CD4-positive, alpha-beta T cell (primary cell): ENCODE measurements at regions of chr4 and their contacts with region 1.

Region 1: GRCh38 chr4:77075869-77076799 is at the start of gene CCNI:
- DNase-seq: peak; percentile 85 to 97 (median 90)
- ATAC-seq: peak; percentile 65
- H3K4me3 ChIP-seq: peak within 1 kb of the TSS; percentile 77
- H3K4me3 Mint-ChIP-seq: peak within 1 kb of the TSS; percentile 94
- H3K27ac ChIP-seq: peak within 1 kb of the TSS; percentile 99 to 100
- H3K27ac Mint-ChIP-seq: no peak within 1 kb of the TSS
- H3K4me1 ChIP-seq: peaks cover 21% of the 10 kb centered on the region
- H3K4me1 Mint-ChIP-seq: peaks cover 35% of the 10 kb centered on the region
- H3K27me3 ChIP-seq: no peaks in the 10 kb centered on the region
- H3K27me3 Mint-ChIP-seq: no peaks in the 10 kb centered on the region
- CTCF ChIP-seq: no peak
- total RNA-seq, gene CCNI: 385 to 418 TPM

Region 2: DNA sequence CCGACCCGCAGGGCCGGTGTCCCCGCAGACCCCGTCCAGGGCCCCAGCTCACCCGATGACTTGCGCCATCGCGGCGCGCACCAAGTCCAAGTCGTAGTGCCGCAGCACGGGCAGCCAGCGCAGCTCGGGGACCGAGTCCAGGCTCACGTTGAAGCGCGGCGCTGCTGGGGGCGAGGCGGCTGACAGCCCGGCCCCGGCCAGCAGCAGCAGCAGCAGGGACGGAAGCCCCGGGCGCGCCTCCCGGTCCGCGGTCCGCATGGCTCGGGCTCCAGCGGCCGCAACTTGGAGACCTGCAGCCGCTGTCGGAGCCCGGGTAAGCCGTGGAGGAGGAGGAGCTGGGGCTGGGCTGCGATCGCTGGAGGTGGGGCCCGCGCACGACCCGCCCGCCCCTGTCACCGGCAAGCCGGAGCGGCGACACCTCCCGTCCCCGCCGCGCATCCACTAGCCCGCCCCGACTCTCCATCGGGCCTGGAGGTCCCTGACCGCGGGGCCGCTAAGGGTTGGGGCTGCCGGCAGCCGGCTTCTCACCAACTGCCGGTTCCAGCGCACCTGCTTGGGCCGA is 1135.4 kb before region 1 on chr4 and contains the start of gene NAAA:
- CTCF ChIA-PET with region 1: no interaction called
- POLR2A ChIA-PET with region 1: no interaction called
- intact Hi-C with region 1: loop called in 1 of 2 experiments (anchors 5 kb)
- DNase-seq: peak; percentile 51 to 93 (median 72)
- ATAC-seq: peak; percentile 83
- H3K4me3 ChIP-seq: peak within 1 kb of the TSS; percentile 86
- H3K4me3 Mint-ChIP-seq: peak within 1 kb of the TSS; percentile 100
- H3K27ac ChIP-seq: peak within 1 kb of the TSS; percentile 79 to 86
- H3K27ac Mint-ChIP-seq: peak within 1 kb of the TSS; percentile 95
- H3K4me1 ChIP-seq: peaks cover 20% of the 10 kb centered on the region
- H3K4me1 Mint-ChIP-seq: peaks cover 27% of the 10 kb centered on the region
- H3K27me3 ChIP-seq: no peaks in the 10 kb centered on the region
- H3K27me3 Mint-ChIP-seq: no peaks in the 10 kb centered on the region
- CTCF ChIP-seq: no peak
- total RNA-seq, gene NAAA: 32.6 to 33.3 TPM

Region 3: DNA sequence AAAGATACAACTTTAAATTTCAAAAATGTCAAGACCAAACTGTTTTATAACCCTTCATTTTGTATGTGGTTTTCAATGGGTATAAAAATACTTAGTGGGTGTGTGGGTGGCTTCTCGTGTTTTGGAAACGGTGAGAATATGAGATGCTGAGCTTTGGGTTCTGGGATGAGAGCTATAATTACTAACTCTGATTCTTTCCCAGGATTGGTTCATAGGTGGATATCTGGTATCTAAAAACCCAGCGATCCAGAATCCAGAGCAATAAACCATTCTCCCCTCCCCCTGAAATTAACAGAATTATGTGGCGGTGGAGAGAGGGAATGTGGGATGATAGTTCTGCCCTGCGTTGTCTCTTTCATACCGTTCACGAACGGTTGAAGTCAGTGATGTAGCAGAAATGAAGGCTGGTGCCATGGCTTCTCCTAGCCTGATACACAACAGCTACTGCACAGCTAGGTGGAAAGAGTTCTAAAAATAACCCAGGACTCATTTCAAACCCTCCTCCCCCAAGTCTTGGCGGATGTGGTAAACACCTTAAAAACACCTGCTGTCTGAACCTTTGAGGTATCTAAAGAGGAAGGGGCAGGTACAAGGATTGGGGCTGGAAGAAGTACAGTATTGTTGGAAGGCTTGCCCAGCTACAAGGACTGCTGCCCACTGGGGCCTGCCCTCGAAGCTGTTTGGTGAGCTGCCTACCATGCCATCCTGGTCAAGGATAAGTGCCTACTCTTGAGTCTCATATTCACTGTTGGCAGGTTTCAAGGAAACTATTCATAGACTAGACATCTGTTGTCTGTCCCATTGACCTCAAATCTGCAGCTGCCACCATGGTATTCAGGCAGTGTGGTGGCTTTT is 82.1 kb before region 1 on chr4:
- CTCF ChIA-PET with region 1: no interaction called
- POLR2A ChIA-PET with region 1: interaction called, 5 read pairs
- intact Hi-C with region 1: loop called in 1 of 2 experiments (anchors 2 kb)
- DNase-seq: peak in 13 of 14 experiments; percentile 18 to 91 (median 37)
- ATAC-seq: peak; percentile 81
- H3K4me3 ChIP-seq: peak overlapping the region; percentile 16
- H3K4me3 Mint-ChIP-seq: peak overlapping the region; percentile 80
- H3K27ac ChIP-seq: peak overlapping the region in 1 of 2 donors; percentile 64
- H3K27ac Mint-ChIP-seq: peak overlapping the region; percentile 92
- H3K4me1 ChIP-seq: peaks cover 46% of the 10 kb centered on the region
- H3K4me1 Mint-ChIP-seq: peaks cover 81% of the 10 kb centered on the region
- H3K27me3 ChIP-seq: no peaks in the 10 kb centered on the region
- H3K27me3 Mint-ChIP-seq: no peaks in the 10 kb centered on the region
- CTCF ChIP-seq: no peak

Region 4: DNA sequence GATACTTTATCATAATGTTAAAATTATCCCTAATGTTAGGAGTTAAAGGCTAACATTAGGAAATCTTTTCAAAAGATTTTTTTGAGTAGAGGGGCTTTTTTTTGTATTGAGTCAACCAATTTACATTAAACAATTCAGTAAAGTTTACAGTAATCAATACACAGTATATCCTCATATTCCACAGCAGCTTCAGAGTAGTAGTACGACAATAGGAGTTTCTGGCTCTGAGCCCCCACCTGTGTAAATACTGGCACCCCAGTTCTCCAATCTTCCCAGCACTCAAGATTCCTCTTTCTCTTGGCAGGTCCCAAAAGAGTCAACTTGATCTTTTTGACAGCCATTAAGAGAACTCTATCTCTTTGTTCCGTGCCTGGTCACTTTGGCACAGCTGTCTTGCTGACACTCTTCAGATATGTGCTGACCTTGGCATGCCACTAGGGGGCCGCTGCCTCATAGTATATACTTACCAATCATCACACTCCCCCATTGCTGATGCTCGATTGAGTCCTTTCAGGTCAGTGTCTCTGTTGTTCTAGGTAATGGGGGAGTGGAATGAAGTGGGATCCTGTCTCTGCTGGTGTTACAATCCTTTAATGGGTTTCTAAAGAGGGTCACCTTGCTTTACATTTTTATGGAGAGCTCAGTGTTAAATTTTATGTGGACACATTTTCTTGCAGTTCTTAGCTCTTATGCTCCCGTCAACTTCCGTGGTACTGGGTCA is 19.1 kb after region 1 on chr4:
- CTCF ChIA-PET with region 1: interaction called, 10 read pairs
- POLR2A ChIA-PET with region 1: interaction called, 7 read pairs
- intact Hi-C with region 1: no loop called
- DNase-seq: peak; percentile 40 to 82 (median 65)
- ATAC-seq: peak; percentile 87
- H3K4me3 ChIP-seq: no peak overlapping the region
- H3K4me3 Mint-ChIP-seq: no peak overlapping the region
- H3K27ac ChIP-seq: no peak overlapping the region
- H3K27ac Mint-ChIP-seq: no peak overlapping the region
- H3K4me1 ChIP-seq: peaks cover 3% of the 10 kb centered on the region
- H3K4me1 Mint-ChIP-seq: peaks cover 19% of the 10 kb centered on the region
- H3K27me3 ChIP-seq: no peaks in the 10 kb centered on the region
- H3K27me3 Mint-ChIP-seq: no peaks in the 10 kb centered on the region
- CTCF ChIP-seq: peak; percentile 65

Region 5: GRCh38 chr4:77203380-77204197 is 127.5 kb after region 1 on chr4:
- CTCF ChIA-PET with region 1: interaction called, 10 read pairs
- POLR2A ChIA-PET with region 1: interaction called, 3 read pairs
- intact Hi-C with region 1: no loop called
- DNase-seq: peak; percentile 36 to 85 (median 56)
- ATAC-seq: peak; percentile 74
- H3K4me3 ChIP-seq: no peak overlapping the region
- H3K4me3 Mint-ChIP-seq: no peak overlapping the region
- H3K27ac ChIP-seq: no peak overlapping the region
- H3K27ac Mint-ChIP-seq: no peak overlapping the region
- H3K4me1 ChIP-seq: peaks cover 4% of the 10 kb centered on the region
- H3K4me1 Mint-ChIP-seq: no peaks in the 10 kb centered on the region
- H3K27me3 ChIP-seq: no peaks in the 10 kb centered on the region
- H3K27me3 Mint-ChIP-seq: no peaks in the 10 kb centered on the region
- CTCF ChIP-seq: peak; percentile 89

Region 6: DNA sequence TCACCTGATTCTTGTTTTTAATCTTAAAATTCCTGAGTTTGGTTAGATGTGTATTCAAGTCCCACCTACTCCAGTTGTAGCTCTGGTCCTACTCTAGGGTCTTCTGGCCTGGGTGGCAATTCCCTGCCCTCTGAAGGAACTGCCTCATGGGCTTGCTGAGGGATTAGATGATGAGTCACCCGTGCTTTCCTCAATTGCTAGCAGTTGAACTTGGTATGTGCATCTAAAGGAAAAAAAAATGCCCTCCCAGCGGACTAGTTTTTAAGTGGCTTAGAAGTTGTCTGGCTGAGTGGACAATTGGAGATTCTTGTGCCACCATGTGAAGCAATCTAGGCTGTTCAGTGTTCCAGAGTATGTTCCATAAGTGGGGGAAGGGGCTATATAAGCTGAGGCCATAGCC is 207.9 kb after region 1 on chr4:
- CTCF ChIA-PET with region 1: no interaction called
- POLR2A ChIA-PET with region 1: no interaction called
- intact Hi-C with region 1: no loop called
- DNase-seq: no peak
- ATAC-seq: no peak
- H3K4me3 ChIP-seq: no peak overlapping the region
- H3K4me3 Mint-ChIP-seq: no peak overlapping the region
- H3K27ac ChIP-seq: no peak overlapping the region
- H3K27ac Mint-ChIP-seq: no peak overlapping the region
- H3K4me1 ChIP-seq: no peaks in the 10 kb centered on the region
- H3K4me1 Mint-ChIP-seq: no peaks in the 10 kb centered on the region
- H3K27me3 ChIP-seq: peaks cover 0 to 6% of the 10 kb centered on the region in 2 experiments
- H3K27me3 Mint-ChIP-seq: peaks cover 5% of the 10 kb centered on the region
- CTCF ChIP-seq: no peak

Region 7: GRCh38 chr4:78775303-78776030 is 1699.3 kb after region 1 on chr4:
- CTCF ChIA-PET with region 1: no interaction called
- POLR2A ChIA-PET with region 1: no interaction called
- intact Hi-C with region 1: loop called in 1 of 2 experiments (anchors 5 kb)
- DNase-seq: peak; percentile 74 to 93 (median 85)
- ATAC-seq: peak; percentile 61
- H3K4me3 ChIP-seq: peak overlapping the region; percentile 94
- H3K4me3 Mint-ChIP-seq: peak overlapping the region; percentile 96
- H3K27ac ChIP-seq: peak overlapping the region; percentile 72 to 87
- H3K27ac Mint-ChIP-seq: peak overlapping the region; percentile 90
- H3K4me1 ChIP-seq: peaks cover 15% of the 10 kb centered on the region
- H3K4me1 Mint-ChIP-seq: peaks cover 20% of the 10 kb centered on the region
- H3K27me3 ChIP-seq: no peaks in the 10 kb centered on the region
- H3K27me3 Mint-ChIP-seq: no peaks in the 10 kb centered on the region
- CTCF ChIP-seq: no peak